Endothelial cell of umbilical vein (primary cell): ENCODE measurements at regions of chr2 and their contacts with region 1.

Region 1: GRCh38 chr2:42095923-42096408 is 48.1 kb downstream of the PKDCC start:
- DNase-seq: peak; percentile 75
- H3K4me3 ChIP-seq: no peak overlapping the region
- H3K27ac ChIP-seq: no peak overlapping the region
- H3K4me1 ChIP-seq: peaks cover 10% of the 10 kb centered on the region
- H3K27me3 ChIP-seq: no peaks in the 10 kb centered on the region
- CTCF ChIP-seq: peak; percentile 50 to 52
- POLR2A ChIP-seq: no peak

Region 2: DNA sequence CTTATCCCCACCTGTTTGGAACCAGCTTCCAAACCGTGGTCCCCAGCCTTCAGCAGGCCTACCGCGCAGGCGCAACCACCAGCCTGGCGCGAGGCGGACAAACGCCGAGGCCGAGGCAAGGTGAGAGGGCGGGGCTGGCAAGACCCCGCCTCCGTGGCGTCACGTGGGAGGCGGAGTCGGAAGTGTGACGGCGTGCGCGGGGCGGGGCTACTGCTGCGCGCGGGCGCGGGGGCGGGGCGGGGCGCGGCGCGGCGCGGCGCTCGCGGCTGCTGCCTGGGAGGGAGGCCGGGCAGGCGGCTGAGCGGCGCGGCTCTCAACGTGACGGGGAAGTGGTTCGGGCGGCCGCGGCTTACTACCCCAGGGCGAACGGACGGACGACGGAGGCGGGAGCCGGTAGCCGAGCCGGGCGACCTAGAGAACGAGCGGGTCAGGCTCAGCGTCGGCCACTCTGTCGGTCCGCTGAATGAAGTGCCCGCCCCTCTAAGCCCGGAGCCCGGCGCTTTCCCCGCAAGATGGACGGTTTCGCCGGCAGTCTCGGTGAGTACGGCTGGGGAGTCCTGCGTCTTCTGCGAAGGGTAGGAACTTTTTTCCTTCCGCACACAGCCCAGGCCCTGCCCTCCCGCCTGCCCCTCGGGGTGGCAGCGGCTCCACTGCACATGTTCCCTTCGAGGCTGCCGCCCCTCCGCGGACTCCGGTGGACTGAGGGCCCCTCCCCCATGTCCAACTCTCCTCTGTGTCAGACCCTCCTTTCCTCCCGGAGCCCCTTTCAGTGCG is 73.3 kb after region 1 on chr2 and contains the start of gene EML4:
- CTCF ChIA-PET with region 1: interaction called, 3 read pairs
- POLR2A ChIA-PET with region 1: no interaction called
- dilution Hi-C with region 1: no loop called
- intact Hi-C with region 1: loop called (anchors 2 kb)
- DNase-seq: peak; percentile 84
- H3K4me3 ChIP-seq: peak within 1 kb of the TSS; percentile 72 to 76 (median 75)
- H3K27ac ChIP-seq: peak within 1 kb of the TSS; percentile 78
- H3K4me1 ChIP-seq: peaks cover 7% of the 10 kb centered on the region
- H3K27me3 ChIP-seq: peaks cover 6 to 7% of the 10 kb centered on the region in 2 experiments
- CTCF ChIP-seq: no peak
- POLR2A ChIP-seq: peak; percentile 80
- total RNA-seq, gene EML4: 30.8 and 32.0 TPM in 2 replicates

Region 3: DNA sequence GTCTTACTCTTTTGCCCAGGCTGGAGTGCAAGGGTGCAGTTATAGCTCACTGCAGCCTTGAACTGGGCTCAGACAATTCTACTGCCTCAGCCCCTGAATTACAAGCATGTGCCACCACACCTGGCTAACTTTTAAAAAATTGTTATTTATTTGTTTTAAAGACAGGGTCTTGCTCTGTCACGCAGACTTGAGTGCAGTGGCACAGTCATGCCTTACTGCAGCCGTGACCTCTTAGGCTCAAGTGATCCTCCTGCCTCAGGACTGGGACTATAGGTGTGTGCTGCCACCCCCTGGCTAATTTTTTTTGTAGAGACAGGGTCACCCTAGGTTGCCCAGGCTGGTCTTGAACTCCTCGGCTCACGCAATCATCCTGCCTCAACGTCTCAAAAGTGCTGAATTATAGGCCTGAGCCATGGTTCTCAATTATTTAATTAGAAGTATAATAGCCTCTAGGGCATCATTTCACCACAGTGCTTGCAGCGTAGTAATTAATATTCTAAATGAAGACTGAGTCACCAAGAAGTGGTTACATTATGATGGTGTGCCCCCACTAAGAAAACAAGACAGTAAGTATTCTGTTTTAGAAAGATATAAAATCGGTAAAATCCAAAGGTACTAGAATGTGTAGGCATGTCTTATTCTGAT is 142.8 kb after region 1 on chr2:
- CTCF ChIA-PET with region 1: interaction called, 7 read pairs
- POLR2A ChIA-PET with region 1: no interaction called
- dilution Hi-C with region 1: no loop called
- intact Hi-C with region 1: loop called (anchors 1 kb)
- DNase-seq: peak; percentile 13
- H3K4me3 ChIP-seq: no peak overlapping the region
- H3K27ac ChIP-seq: no peak overlapping the region
- H3K4me1 ChIP-seq: peaks cover 11% of the 10 kb centered on the region
- H3K27me3 ChIP-seq: no peaks in the 10 kb centered on the region
- CTCF ChIP-seq: no peak
- POLR2A ChIP-seq: no peak

Region 4: GRCh38 chr2:42342061-42342794 is 246.3 kb after region 1 on chr2:
- CTCF ChIA-PET with region 1: interaction called, 12 read pairs
- POLR2A ChIA-PET with region 1: no interaction called
- dilution Hi-C with region 1: no loop called
- intact Hi-C with region 1: no loop called
- DNase-seq: peak; percentile 57
- H3K4me3 ChIP-seq: no peak overlapping the region
- H3K27ac ChIP-seq: peak overlapping the region; percentile 51
- H3K4me1 ChIP-seq: peaks cover 17% of the 10 kb centered on the region
- H3K27me3 ChIP-seq: no peaks in the 10 kb centered on the region
- CTCF ChIP-seq: no peak
- POLR2A ChIP-seq: no peak

Region 5: DNA sequence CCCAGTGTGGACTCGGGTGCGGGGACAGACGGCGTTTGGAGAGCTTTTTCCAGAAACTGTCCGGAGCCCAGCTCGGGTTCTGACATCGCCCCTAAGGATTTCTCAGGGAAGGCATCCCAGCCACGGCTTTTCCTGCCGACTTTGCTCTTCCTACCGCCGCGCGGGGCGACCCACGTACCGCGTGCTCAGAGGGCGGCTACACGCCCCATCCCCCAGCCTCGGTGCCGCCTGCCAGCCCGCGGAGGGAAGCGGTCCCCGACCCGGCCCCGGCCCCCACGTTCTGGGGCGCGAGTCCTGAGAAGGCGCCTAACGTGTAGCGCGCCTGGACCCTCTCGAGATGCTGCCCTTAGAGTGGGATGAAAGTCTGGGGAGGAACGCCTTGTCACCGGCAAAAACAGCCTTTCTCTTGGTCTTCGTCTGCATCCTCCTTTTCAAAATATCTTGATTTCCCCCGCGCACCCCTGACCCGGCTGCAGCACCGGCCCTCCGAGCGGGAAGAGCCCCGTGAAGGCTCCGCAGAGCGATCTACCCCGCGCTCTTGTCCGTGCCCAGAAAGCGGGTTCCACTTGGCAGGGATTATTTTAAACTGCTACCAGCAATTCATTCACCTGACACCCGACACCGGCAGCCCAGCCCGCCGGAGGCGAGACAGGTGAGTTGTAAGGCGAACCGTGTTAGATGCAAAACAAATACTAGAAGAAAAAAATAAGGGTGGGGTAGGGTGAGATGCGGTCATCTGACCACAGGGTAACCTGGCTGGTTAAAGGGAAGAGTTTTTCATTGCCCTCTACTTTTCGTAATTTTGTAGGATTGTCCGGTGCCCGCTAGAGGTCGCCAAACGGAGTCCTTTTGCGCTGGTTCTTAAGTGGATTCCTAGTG is 398.6 kb after region 1 on chr2:
- CTCF ChIA-PET with region 1: no interaction called
- POLR2A ChIA-PET with region 1: no interaction called
- dilution Hi-C with region 1: no loop called
- intact Hi-C with region 1: loop called (anchors 5 kb)
- DNase-seq: peak; percentile 83
- H3K4me3 ChIP-seq: peak overlapping the region; percentile 20 to 70 (median 46)
- H3K27ac ChIP-seq: no peak overlapping the region
- H3K4me1 ChIP-seq: peaks cover 6% of the 10 kb centered on the region
- H3K27me3 ChIP-seq: peaks cover 13 to 23% of the 10 kb centered on the region in 2 experiments
- CTCF ChIP-seq: peak; percentile 81 to 89
- POLR2A ChIP-seq: no peak